Heart left ventricle (tissue), 16 donors: ENCODE measurements at regions of chr12 and their contacts with region 1.

Region 1: DNA sequence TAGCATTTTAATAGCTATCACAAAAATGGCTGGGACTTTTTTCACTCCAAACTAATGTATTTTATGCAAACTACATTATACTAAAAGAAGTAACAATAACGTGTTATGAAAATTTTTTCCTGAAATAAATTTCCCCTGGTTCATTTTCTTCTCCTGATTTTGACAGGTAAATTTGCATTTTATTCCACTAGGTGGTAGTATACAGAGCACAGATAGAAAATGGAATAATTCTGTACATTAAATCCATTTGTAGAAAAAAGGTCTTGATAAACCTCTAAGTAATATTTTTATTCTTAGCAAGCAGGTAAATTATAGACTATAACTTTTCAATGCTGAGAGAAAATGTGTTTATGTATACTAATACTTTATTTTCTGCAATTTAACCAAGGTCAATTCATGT is 96.5 kb downstream of the BCAT1 start:
- DNase-seq: no peak
- ATAC-seq: no peak
- H3K4me3 ChIP-seq: no peak overlapping the region
- H3K27ac ChIP-seq: no peak overlapping the region
- H3K4me1 ChIP-seq: no peaks in the 10 kb centered on the region
- H3K27me3 ChIP-seq: no peaks in the 10 kb centered on the region
- CTCF ChIP-seq: peak in 10 of 12 donors; percentile 6 to 45 (median 25)
- POLR2A ChIP-seq: no peak

Region 2: GRCh38 chr12:24574538-24574937 is 277.9 kb before region 1 on chr12:
- intact Hi-C with region 1: no loop called
- DNase-seq: no peak
- ATAC-seq: no peak
- H3K4me3 ChIP-seq: no peak overlapping the region
- H3K27ac ChIP-seq: no peak overlapping the region
- H3K4me1 ChIP-seq: no peaks in the 10 kb centered on the region
- H3K27me3 ChIP-seq: peaks cover 0 to 6% (median 0%) of the 10 kb centered on the region in 9 donors
- CTCF ChIP-seq: no peak
- POLR2A ChIP-seq: no peak

Region 3: DNA sequence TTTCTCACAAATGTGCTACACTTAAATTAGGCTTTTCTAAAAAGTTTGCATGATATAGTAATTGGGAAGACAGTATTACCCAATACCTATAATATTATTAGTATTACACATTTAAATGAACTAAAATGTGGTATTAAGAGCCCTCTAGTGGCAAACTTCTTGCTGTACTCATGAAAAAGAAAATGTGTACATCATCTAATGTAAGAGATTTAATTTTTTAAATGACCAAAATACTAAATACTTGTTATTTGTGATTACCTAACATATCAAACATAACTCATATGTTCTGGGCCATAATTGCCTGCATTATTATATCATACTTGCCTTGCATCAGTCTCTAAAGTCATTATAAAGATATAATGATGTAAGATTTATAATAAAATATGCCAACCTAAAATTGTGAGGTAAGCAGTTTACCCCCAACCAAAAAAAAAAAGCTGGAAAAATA is 278.3 kb after region 1 on chr12:
- intact Hi-C with region 1: loop called in 1 of 10 experiments (anchors 10 kb)
- DNase-seq: no peak
- ATAC-seq: no peak
- H3K4me3 ChIP-seq: no peak overlapping the region
- H3K27ac ChIP-seq: no peak overlapping the region
- H3K4me1 ChIP-seq: no peaks in the 10 kb centered on the region
- H3K27me3 ChIP-seq: no peaks in the 10 kb centered on the region
- CTCF ChIP-seq: peak; percentile 58 to 80 (median 73)
- POLR2A ChIP-seq: no peak